Cardiac septum (tissue), 1 donor: ENCODE measurements at regions of chr2 and their contacts with region 1.

Region 1: DNA sequence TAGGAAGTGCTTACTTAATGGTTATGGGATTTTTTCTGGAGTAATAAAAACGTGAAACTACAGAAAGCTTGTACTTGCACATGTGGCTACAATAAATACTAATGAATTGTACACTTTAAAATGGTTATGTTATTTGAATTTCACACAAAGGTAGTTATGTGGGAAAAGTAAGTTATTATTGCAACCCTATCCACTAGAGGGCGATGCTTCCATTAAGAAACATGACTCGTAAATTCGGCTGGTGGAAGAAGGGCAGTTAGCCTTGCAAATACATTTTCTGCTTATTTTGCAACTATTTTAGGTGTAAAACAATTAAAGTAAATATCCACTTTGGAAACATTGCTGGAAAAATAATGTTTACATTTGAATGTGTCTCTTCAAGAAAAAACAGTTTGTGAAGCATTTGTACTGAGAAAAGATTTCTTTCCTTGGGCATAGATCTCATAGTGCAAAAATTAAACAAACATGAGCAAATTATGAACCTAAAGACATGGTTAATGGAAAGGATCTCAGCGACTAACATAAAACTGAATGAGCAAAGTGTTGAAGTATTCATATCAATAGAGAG is 68.1 kb upstream of the CSRNP3 start:
- DNase-seq: no peak

Region 2: GRCh38 chr2:165469417-165469816 is 68.0 kb after region 1 on chr2 and contains the start of gene CSRNP3:
- intact Hi-C with region 1: loop called (anchors 5 kb)
- DNase-seq: peak; percentile 77
- total RNA-seq, gene CSRNP3: 2.9 TPM

Region 3: GRCh38 chr2:165558832-165559231 is 157.5 kb after region 1 on chr2:
- intact Hi-C with region 1: loop called (anchors 10 kb)
- DNase-seq: no peak

Region 4: DNA sequence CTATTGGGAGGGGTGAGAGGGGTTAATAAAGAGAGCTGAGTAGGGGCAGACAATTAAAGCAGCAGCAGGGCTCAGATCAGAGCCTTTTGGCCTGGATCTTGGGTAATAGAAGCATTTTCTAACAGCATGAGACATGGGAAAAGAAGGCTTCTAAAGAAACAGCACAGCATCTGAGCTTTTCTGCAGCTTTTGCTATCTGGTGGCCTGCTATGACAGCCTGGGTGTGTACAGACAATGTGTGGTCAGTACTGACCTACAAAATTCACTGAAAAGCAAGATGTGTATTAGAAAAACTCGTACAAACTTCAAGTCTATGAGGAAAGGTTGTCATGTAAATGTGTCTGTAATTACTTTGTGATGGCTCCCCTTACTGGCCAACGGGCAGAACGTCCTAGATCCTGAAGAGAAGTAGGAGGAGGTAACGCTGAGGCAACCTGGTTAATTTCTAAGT is 297.1 kb after region 1 on chr2:
- intact Hi-C with region 1: loop called (anchors 2 kb)
- DNase-seq: no peak

Region 5: DNA sequence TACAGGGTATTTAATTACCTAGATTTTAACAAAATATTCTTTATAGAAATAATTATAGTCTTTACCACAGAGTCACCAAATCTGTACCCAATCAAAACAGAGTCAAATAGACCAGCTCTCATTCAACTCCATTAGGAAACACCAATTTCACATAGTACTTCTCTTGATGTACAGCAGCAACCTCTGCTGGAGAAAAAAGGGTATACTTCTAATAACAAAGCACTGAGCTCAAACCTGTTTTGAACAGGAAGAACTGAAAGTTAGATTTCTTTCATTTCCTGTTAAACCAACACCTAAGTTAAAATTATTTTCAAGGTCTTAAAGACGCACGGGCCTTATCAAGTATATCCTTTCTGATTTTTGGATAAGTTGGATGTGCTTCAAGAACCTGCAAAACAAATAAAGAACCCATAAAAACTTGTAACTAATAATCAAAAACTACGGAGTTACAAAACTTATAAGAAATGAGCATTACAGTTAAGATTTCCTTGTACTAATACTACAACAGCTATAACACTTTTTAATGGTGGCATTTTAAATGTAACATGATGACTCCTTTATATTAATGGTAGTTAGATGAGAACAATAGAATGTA is 473.2 kb after region 1 on chr2:
- intact Hi-C with region 1: loop called (anchors 2 kb)
- DNase-seq: no peak